Activated B cell treated with CpG ODN at 0.5 μM for 24 hours (primary cell): ENCODE measurements at regions of chr11 and their contacts with region 1.

Region 1: GRCh38 chr11:75867775-75868374 is 52.9 kb downstream of the UVRAG start:
- DNase-seq: no peak
- ATAC-seq: peak; percentile 74
- H3K4me3 Mint-ChIP-seq: no peak overlapping the region
- H3K27ac Mint-ChIP-seq: peak overlapping the region; percentile 22
- H3K4me1 Mint-ChIP-seq: peaks cover 58% of the 10 kb centered on the region
- H3K27me3 Mint-ChIP-seq: no peaks in the 10 kb centered on the region
- CTCF ChIP-seq: no peak

Region 2: GRCh38 chr11:75706260-75706729 is 161.6 kb before region 1 on chr11:
- CTCF ChIA-PET with region 1: interaction called, 6 read pairs
- POLR2A ChIA-PET with region 1: no interaction called
- intact Hi-C with region 1: loop called (anchors 5 kb)
- DNase-seq: peak; percentile 51
- ATAC-seq: peak; percentile 92
- H3K4me3 Mint-ChIP-seq: no peak overlapping the region
- H3K27ac Mint-ChIP-seq: no peak overlapping the region
- H3K4me1 Mint-ChIP-seq: peaks cover 11% of the 10 kb centered on the region
- H3K27me3 Mint-ChIP-seq: peaks cover 4% of the 10 kb centered on the region
- CTCF ChIP-seq: peak; percentile 33

Region 3: GRCh38 chr11:75802913-75803820 is 64.7 kb before region 1 on chr11:
- CTCF ChIA-PET with region 1: interaction called, 258 read pairs
- POLR2A ChIA-PET with region 1: interaction called, 5 read pairs
- intact Hi-C with region 1: loop called (anchors 1 kb)
- DNase-seq: peak; percentile 50
- ATAC-seq: peak; percentile 95
- H3K4me3 Mint-ChIP-seq: no peak overlapping the region
- H3K27ac Mint-ChIP-seq: no peak overlapping the region
- H3K4me1 Mint-ChIP-seq: peaks cover 15% of the 10 kb centered on the region
- H3K27me3 Mint-ChIP-seq: no peaks in the 10 kb centered on the region
- CTCF ChIP-seq: peak; percentile 17

Region 4: DNA sequence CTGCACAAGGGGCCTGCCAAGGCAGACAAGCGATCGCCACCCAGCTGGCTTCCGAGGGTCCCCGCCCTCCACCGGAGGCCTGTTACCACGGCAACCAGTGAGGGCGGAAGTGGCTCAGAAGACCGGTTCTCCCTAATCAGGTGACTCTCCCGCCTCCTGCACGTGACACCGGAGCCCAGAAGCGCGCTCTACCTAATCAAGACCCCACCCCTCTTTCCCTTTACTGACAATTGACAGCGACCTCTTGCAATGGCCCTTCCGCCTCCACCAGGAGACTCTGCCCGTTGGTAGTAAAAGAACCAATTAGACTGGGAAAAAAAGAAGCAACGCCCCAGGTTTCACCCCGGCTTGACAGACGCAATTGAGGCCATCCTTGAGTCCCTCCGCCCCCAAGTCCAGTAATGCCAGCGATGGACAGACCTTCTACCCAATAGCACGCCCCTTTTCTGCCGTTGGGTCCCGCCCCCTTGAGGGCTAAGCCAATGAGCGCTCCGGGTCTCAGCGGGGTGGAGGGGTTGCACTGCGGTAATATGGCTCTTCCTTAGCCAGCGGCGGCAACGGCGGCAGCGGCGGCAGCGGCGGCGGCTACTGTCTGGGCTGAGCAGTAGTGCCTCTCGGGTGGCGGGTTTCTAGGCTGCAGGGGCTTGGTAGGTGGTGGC is 53.1 kb before region 1 on chr11 and contains the start of gene UVRAG:
- CTCF ChIA-PET with region 1: interaction called, 23 read pairs
- POLR2A ChIA-PET with region 1: interaction called, 3 read pairs
- intact Hi-C with region 1: loop called (anchors 1 kb)
- DNase-seq: peak; percentile 96
- ATAC-seq: peak; percentile 85
- H3K4me3 Mint-ChIP-seq: no peak within 1 kb of the TSS
- H3K27ac Mint-ChIP-seq: peak within 1 kb of the TSS; percentile 96
- H3K4me1 Mint-ChIP-seq: peaks cover 53% of the 10 kb centered on the region
- H3K27me3 Mint-ChIP-seq: no peaks in the 10 kb centered on the region
- CTCF ChIP-seq: no peak
- total RNA-seq, gene UVRAG: 86.8 and 103 TPM in 2 replicates

Region 5: DNA sequence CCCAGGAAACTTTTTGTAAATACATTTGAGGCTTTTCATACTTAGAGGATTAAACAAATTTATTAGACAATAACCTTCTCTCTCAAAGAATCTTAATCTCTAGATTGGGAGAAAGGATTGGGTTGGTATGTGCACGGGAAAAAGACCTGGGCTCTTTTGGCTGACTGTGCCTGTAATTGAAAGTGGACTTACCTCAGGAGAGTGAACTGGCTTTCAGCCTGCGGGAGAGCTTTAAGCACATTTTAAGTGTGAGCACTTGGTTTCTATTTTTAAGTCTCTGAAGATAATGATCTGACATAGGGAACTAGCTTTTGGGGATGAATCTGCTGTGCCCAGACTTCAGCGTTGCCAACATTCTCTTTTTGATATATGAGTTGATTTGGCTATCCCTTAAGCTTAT is 17.1 kb before region 1 on chr11:
- CTCF ChIA-PET with region 1: interaction called, 4 read pairs
- POLR2A ChIA-PET with region 1: interaction called, 8 read pairs
- intact Hi-C with region 1: loop called (anchors 2 kb)
- DNase-seq: no peak
- ATAC-seq: no peak
- H3K4me3 Mint-ChIP-seq: peak overlapping the region; percentile 8
- H3K27ac Mint-ChIP-seq: peak overlapping the region; percentile 55
- H3K4me1 Mint-ChIP-seq: peaks cover 59% of the 10 kb centered on the region
- H3K27me3 Mint-ChIP-seq: no peaks in the 10 kb centered on the region
- CTCF ChIP-seq: no peak

Region 6: DNA sequence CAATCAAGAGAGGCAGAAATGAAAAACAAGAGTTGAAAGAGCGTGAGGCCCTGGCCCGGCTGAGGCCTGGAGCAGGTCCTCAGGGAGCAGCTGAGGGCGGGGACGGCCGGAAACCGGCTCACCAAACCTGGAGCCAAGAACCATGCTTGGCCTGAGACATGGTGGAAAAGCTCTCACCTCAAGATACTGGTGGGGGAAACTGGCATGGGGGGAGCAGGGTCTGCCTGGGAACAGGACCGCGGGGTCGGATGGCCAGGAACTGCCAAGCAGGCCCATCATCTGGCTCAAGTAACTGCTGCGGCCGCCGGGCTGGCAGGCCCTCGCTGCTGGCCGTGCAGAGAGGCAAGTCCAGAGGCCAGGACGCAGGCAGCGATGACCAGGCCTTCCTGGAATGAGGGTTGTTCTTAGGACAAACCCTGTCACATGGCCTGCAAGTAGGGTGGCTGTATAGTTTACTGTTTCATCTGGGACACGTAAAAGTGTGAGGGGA is 357.3 kb after region 1 on chr11:
- CTCF ChIA-PET with region 1: no interaction called
- POLR2A ChIA-PET with region 1: no interaction called
- intact Hi-C with region 1: no loop called
- DNase-seq: no peak
- ATAC-seq: no peak
- H3K4me3 Mint-ChIP-seq: no peak overlapping the region
- H3K27ac Mint-ChIP-seq: no peak overlapping the region
- H3K4me1 Mint-ChIP-seq: no peaks in the 10 kb centered on the region
- H3K27me3 Mint-ChIP-seq: peaks cover under 1% of the 10 kb centered on the region
- CTCF ChIP-seq: no peak